HEK293 (cell line): ENCODE measurements at regions of chr17 and their contacts with region 1.

Region 1: DNA sequence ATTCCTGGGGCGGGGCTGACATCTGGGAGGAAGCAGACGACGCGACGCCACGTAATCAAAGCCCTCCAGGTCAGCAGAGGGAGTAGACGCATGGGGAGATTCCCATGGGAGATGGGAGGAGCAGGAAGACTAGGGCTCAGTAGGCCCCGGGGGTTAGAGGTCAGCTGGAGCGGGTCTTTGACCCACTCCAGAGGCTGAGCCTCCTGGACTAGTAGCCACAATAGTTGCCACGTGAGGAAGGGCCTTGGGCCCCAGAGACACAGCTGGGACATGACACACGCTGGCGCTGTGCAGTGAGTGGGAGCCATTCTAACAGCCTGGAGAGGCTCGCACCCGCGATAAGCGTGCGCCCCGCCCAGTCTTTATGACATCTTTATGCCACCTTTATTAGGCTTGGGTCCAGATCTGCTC is 95.7 kb upstream of the AMZ2 start:
- H3K4me3 ChIP-seq: no peak overlapping the region
- H3K27ac ChIP-seq: no peak overlapping the region
- H3K4me1 ChIP-seq: no peaks in the 10 kb centered on the region
- CTCF ChIP-seq: no peak

Region 2: DNA sequence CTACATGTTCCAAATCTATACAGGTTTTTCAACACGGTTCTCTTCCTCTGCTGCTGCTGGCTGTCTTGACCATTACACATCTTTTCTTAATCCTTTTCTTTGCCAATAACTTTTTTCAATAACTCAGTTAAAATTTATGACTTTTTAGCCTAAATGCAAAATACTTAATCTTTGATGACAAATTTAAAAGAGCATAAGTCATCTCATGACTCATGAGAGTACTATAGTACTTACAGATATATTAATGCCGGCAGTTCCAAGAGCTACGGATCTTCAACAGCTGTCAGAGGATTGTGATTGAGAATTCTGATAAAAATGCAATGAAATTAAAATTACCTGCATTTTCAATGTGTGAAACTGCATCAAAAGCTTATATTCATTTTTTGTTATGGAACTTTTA is 11.1 kb before region 1 on chr17:
- CTCF ChIA-PET with region 1: no interaction called
- POLR2A ChIA-PET with region 1: interaction called, 10 read pairs
- H3K4me3 ChIP-seq: no peak overlapping the region
- H3K27ac ChIP-seq: no peak overlapping the region
- H3K4me1 ChIP-seq: no peaks in the 10 kb centered on the region
- CTCF ChIP-seq: no peak